Activated naive CD4-positive, alpha-beta T cell treated with anti-CD3 and anti-CD28 coated beads for 36 hours (primary cell): ENCODE measurements at regions of chr5 and their contacts with region 1.

Region 1: GRCh38 chr5:133025804-133026663 is at the start of gene ZCCHC10:
- DNase-seq: peak; percentile 96
- H3K4me3 Mint-ChIP-seq: peak within 1 kb of the TSS; percentile 87
- H3K27ac Mint-ChIP-seq: peak within 1 kb of the TSS; percentile 87
- H3K4me1 Mint-ChIP-seq: peaks cover 18% of the 10 kb centered on the region
- H3K27me3 Mint-ChIP-seq: no peaks in the 10 kb centered on the region
- total RNA-seq, gene ZCCHC10: 23.5 to 27.0 TPM

Region 2: GRCh38 chr5:132963175-132964104 is 62.6 kb before region 1 on chr5 and contains the start of gene AFF4:
- CTCF ChIA-PET with region 1: no interaction called
- intact Hi-C with region 1: loop called (anchors 1 kb)
- DNase-seq: peak; percentile 86
- H3K4me3 Mint-ChIP-seq: peak within 1 kb of the TSS; percentile 95
- H3K27ac Mint-ChIP-seq: peak within 1 kb of the TSS; percentile 97
- H3K4me1 Mint-ChIP-seq: peaks cover 33% of the 10 kb centered on the region
- H3K27me3 Mint-ChIP-seq: no peaks in the 10 kb centered on the region
- total RNA-seq, gene AFF4: 13.6 to 14.2 TPM

Region 3: DNA sequence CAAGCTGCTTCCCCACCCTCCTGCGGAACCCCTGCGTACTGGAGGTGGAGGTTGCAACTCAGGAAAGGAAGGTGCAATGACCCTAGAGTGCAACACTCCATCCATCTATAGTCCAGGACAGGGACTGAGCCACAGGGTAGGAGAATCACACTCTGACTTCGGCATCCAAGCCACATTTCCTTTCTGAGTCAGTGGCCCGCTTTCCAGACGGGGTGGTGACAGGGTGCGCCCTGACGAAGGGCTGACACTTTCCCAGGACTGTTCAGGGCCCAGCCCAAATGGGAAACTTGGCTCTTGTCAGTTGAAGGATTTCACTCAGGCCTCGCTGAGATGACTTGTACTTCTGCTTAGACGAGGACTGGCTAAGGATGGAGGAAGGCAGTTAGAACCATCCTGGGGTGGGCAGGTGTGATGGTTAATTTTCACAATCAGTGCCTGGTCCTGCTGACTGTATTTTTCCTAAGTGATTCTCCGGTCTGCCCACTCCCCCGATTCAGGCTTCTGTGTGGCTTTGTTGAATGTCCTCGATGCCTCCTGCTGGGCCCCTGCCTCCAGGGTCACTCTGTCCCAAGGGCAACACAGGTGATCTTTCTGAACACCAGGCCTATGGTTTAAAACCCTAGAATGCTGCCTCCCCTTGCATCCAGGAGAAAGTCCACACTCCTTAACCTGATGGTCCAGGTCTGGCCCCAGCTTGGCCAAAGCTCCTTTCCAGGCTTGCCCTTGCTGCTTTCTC is 358.3 kb after region 1 on chr5:
- CTCF ChIA-PET with region 1: no interaction called
- intact Hi-C with region 1: no loop called
- DNase-seq: no peak
- H3K4me3 Mint-ChIP-seq: no peak overlapping the region
- H3K27ac Mint-ChIP-seq: no peak overlapping the region
- H3K4me1 Mint-ChIP-seq: peaks cover 2% of the 10 kb centered on the region
- H3K27me3 Mint-ChIP-seq: peaks cover 5% of the 10 kb centered on the region